Caco-2 (cell line): ENCODE measurements at regions of chr6 and their contacts with region 1.

Region 1: DNA sequence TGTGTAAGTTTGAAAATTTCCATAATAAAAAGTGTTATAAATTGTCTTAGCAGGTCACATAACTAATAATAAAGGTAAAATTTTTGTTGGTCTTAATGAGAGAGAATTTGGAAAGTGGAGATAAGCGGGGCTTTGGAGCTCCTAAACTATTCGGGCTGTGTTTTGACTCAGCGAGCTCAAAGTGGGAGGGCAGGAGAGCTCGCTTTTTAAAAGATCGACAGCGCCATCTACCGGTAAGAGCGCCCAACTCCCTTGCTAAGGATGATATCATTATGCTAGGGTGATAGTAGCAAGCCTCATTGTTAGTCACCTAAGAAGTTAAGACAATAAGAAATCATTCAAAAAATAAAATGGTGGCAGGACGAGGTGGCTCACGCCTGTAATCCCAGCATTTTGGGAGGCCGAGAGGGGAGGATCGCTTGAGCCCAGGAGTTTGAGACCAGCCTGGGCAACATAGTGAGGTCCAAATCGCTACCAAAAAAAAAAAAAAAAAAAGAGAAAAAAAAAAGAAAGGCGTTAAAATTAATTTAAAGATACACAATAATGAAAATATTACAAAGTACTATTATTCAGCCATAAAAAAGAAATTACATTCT is 24.8 kb downstream of the C6orf15 start:
- DNase-seq: peak; percentile 70 to 82
- H3K4me3 ChIP-seq: no peak overlapping the region
- H3K4me3 Mint-ChIP-seq: no peak overlapping the region
- H3K27ac Mint-ChIP-seq: no peak overlapping the region
- H3K4me1 ChIP-seq: peaks cover 14% of the 10 kb centered on the region
- H3K4me1 Mint-ChIP-seq: peaks cover 6% of the 10 kb centered on the region
- H3K27me3 ChIP-seq: no peaks in the 10 kb centered on the region
- H3K27me3 Mint-ChIP-seq: no peaks in the 10 kb centered on the region
- CTCF ChIP-seq: peak; percentile 51 to 58

Region 2: DNA sequence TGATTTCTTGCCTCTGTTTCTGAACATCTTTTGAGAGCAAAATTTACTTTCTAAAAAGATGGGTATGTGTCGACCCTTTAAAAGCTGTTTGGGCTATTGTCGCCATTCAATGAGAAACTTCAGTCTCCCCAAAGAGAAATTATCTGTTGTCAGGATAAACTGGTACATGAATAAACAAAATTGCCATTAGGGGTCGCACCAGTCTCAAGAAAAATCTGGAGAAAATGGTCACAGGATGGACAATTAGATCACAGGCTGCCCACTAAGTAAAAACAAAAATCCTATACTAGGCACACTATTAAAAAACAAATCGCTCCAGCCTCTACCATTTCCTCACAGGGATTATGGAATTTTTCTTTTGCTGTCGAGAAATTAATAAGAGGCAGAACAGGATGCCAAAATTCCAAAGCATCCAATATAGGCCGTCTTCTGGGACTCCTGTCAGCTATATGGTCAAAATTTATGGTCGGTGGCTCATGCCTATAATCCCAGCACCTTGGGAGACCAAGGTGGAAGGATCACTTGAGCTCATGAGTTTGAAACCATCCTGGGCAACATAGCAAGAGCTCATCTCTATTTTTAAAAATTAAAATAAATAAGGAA is 603.8 kb before region 1 on chr6:
- CTCF ChIA-PET with region 1: no interaction called
- POLR2A ChIA-PET with region 1: no interaction called
- intact Hi-C with region 1: loop called (anchors 5 kb)
- DNase-seq: peak in 1 of 2 experiments; percentile 65
- H3K4me3 ChIP-seq: no peak overlapping the region
- H3K4me3 Mint-ChIP-seq: no peak overlapping the region
- H3K27ac Mint-ChIP-seq: no peak overlapping the region
- H3K4me1 ChIP-seq: peaks cover 16% of the 10 kb centered on the region
- H3K4me1 Mint-ChIP-seq: peaks cover 11% of the 10 kb centered on the region
- H3K27me3 ChIP-seq: peaks cover 4% of the 10 kb centered on the region
- H3K27me3 Mint-ChIP-seq: peaks cover 20% of the 10 kb centered on the region
- CTCF ChIP-seq: peak; percentile 40 to 49

Region 3: GRCh38 chr6:30742316-30743098 is 345.1 kb before region 1 on chr6 and contains the start of gene FLOT1:
- CTCF ChIA-PET with region 1: interaction called, 3 read pairs
- POLR2A ChIA-PET with region 1: no interaction called
- intact Hi-C with region 1: loop called (anchors 10 kb)
- DNase-seq: peak; percentile 96 to 97
- H3K4me3 ChIP-seq: peak within 1 kb of the TSS; percentile 48
- H3K4me3 Mint-ChIP-seq: peak within 1 kb of the TSS; percentile 90
- H3K27ac Mint-ChIP-seq: peak within 1 kb of the TSS; percentile 82
- H3K4me1 ChIP-seq: peaks cover 19% of the 10 kb centered on the region
- H3K4me1 Mint-ChIP-seq: peaks cover 25% of the 10 kb centered on the region
- H3K27me3 ChIP-seq: no peaks in the 10 kb centered on the region
- H3K27me3 Mint-ChIP-seq: no peaks in the 10 kb centered on the region
- CTCF ChIP-seq: no peak
- total RNA-seq, gene FLOT1: 101 and 113 TPM in 2 replicates

Region 4: GRCh38 chr6:30828027-30828960 is 259.3 kb before region 1 on chr6:
- CTCF ChIA-PET with region 1: interaction called, 11 read pairs
- POLR2A ChIA-PET with region 1: no interaction called
- intact Hi-C with region 1: loop called (anchors 2 kb)
- DNase-seq: peak; percentile 83 to 91
- H3K4me3 ChIP-seq: no peak overlapping the region
- H3K4me3 Mint-ChIP-seq: no peak overlapping the region
- H3K27ac Mint-ChIP-seq: peak overlapping the region; percentile 43
- H3K4me1 ChIP-seq: peaks cover 16% of the 10 kb centered on the region
- H3K4me1 Mint-ChIP-seq: peaks cover 27% of the 10 kb centered on the region
- H3K27me3 ChIP-seq: no peaks in the 10 kb centered on the region
- H3K27me3 Mint-ChIP-seq: no peaks in the 10 kb centered on the region
- CTCF ChIP-seq: peak; percentile 85 to 89

Region 5: GRCh38 chr6:30907758-30908591 is 179.6 kb before region 1 on chr6 and contains the start of gene GTF2H4:
- CTCF ChIA-PET with region 1: interaction called, 66 read pairs
- POLR2A ChIA-PET with region 1: no interaction called
- intact Hi-C with region 1: no loop called
- DNase-seq: peak; percentile 95 to 98
- H3K4me3 ChIP-seq: peak within 1 kb of the TSS; percentile 76
- H3K4me3 Mint-ChIP-seq: peak within 1 kb of the TSS; percentile 90
- H3K27ac Mint-ChIP-seq: peak within 1 kb of the TSS; percentile 60
- H3K4me1 ChIP-seq: peaks cover 9% of the 10 kb centered on the region; the same call in 1 of the 2 replicates
- H3K4me1 Mint-ChIP-seq: peaks cover 9% of the 10 kb centered on the region
- H3K27me3 ChIP-seq: no peaks in the 10 kb centered on the region
- H3K27me3 Mint-ChIP-seq: no peaks in the 10 kb centered on the region
- CTCF ChIP-seq: no peak
- total RNA-seq, gene GTF2H4: 40.6 and 43.6 TPM in 2 replicates

Region 6: DNA sequence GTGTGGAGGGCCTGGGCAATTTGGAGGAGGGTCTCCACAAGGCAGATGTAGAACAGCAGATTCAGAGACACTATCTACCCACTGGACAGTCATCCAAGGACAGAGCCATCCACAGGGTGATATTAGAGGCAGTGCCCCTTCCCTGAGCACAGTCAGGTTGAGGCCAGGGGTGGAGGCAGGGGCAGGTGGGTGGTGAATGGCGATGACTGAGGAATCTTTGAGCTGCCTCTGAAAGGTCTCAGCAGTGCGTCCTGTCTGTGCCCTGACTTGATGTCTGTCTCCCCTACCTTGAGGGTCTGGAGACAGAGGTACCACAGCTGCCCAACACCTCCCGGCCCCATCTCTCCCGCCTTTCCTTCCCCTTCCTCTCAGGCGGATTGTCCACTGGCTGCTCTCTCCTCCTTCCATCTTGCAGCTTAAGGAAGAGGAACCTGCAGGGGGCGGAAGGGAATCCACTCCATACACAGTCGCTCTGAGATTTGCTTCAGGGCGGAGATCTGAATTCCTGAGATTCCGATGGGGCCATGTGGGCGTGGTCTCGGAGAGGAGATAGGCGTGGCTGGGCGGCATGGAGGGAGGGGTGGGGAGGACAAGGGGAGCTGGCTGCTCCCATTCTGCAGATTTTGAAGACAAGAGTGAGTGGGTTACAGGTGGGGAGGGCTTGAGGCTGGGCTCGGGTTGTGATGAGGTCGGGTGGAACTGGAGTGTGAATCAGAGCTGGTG is 145.1 kb before region 1 on chr6:
- CTCF ChIA-PET with region 1: interaction called, 20 read pairs
- POLR2A ChIA-PET with region 1: no interaction called
- intact Hi-C with region 1: no loop called
- DNase-seq: peak; percentile 91 to 94
- H3K4me3 ChIP-seq: no peak overlapping the region
- H3K4me3 Mint-ChIP-seq: peak overlapping the region; percentile 55
- H3K27ac Mint-ChIP-seq: peak overlapping the region; percentile 80
- H3K4me1 ChIP-seq: peaks cover 23% of the 10 kb centered on the region
- H3K4me1 Mint-ChIP-seq: peaks cover 23% of the 10 kb centered on the region
- H3K27me3 ChIP-seq: no peaks in the 10 kb centered on the region
- H3K27me3 Mint-ChIP-seq: no peaks in the 10 kb centered on the region
- CTCF ChIP-seq: peak; percentile 52 to 67

Region 7: DNA sequence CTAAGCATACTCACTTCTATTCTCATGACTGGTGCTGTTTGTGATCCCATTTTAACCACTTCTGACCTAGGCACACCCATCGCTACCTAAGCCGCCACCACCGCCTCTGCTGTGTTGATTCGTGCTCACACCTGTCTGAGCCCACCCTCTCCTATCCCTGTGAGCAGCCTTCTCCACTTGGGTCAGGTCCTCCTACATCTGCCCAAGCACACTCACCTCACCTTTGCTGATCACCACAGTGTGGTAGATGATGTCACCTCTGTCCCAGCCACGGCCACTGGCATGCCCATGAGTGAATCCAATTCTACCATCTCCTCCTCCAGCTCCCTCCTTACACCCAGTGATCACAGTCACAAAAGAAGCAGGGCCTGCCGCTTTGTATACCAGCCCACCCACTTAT is 56.5 kb before region 1 on chr6:
- CTCF ChIA-PET with region 1: no interaction called
- POLR2A ChIA-PET with region 1: no interaction called
- intact Hi-C with region 1: no loop called
- DNase-seq: no peak
- H3K4me3 ChIP-seq: no peak overlapping the region
- H3K4me3 Mint-ChIP-seq: no peak overlapping the region
- H3K27ac Mint-ChIP-seq: no peak overlapping the region
- H3K4me1 ChIP-seq: no peaks in the 10 kb centered on the region
- H3K4me1 Mint-ChIP-seq: no peaks in the 10 kb centered on the region
- H3K27me3 ChIP-seq: no peaks in the 10 kb centered on the region
- H3K27me3 Mint-ChIP-seq: no peaks in the 10 kb centered on the region
- CTCF ChIP-seq: no peak

Region 8: DNA sequence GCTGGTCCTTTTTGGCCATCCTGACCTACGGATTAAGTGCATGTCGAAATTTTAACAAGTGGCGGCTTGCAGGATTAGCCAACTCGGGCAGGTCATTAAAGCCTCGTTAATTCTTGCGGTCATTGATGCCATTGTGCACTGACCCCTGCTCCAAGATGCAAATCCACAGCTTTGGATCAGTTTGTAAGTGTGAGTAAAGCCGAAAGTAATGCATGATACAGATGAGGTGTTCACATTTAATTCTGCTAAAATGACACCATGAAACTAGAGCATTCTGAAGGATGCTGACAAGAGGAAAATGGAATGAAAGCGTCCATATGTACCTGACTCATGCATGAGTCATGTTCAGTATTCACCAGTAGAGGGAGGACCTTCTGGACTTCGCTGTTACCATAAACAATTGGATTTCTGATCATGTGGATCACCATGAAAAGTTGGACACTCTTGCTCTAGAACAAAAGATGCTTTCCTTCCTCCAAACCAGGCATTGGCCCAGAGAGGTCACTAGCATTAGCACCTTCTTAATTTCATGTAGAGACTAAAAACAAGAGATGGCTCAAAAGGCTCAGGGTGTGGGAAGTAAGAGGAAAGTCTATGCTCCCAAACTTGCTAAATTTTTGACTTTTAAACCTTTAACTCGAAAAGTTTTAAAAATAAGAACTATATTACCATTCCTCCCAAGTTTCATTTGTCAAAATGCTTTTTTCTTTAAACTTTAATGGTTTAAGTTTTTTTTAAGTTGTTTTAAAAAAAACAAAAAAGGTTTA is 29.3 kb before region 1 on chr6:
- CTCF ChIA-PET with region 1: interaction called, 4 read pairs
- POLR2A ChIA-PET with region 1: no interaction called
- intact Hi-C with region 1: loop called (anchors 2 kb)
- DNase-seq: peak in 1 of 2 experiments; percentile 28
- H3K4me3 ChIP-seq: no peak overlapping the region
- H3K4me3 Mint-ChIP-seq: no peak overlapping the region
- H3K27ac Mint-ChIP-seq: no peak overlapping the region
- H3K4me1 ChIP-seq: no peaks in the 10 kb centered on the region
- H3K4me1 Mint-ChIP-seq: no peaks in the 10 kb centered on the region
- H3K27me3 ChIP-seq: no peaks in the 10 kb centered on the region
- H3K27me3 Mint-ChIP-seq: no peaks in the 10 kb centered on the region
- CTCF ChIP-seq: peak; percentile 41 to 64